ENCODE measurements at regions of chr3 and their contacts with region 1.

Region 1: DNA sequence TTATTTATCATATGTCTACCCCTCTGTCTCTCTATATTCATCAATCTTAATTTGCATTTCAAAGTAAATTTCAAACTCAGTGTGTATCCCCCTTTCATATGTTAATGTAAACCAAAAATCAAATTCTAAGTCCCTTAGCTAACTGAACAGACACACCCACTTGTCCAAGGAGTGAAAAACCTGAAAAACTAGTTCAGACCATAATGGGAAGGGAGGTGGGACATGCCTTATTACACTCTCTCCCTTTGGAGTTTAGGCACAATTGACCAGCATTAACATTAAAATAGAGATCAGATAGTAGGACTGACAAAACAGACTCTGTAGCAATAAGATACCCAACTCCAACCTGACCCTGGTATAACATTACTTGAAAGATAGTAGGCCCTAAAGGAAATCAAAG is 247.7 kb upstream of the GADL1 start:
- DNase-seq: no peak
- ATAC-seq: no peak
- H3K4me3 ChIP-seq: no peak overlapping the region
- H3K4me3 Mint-ChIP-seq: no peak overlapping the region
- H3K27ac ChIP-seq: no peak overlapping the region
- H3K27ac Mint-ChIP-seq: no peak overlapping the region
- H3K4me1 ChIP-seq: no peaks in the 10 kb centered on the region
- H3K4me1 Mint-ChIP-seq: no peaks in the 10 kb centered on the region
- H3K27me3 ChIP-seq: no peaks in the 10 kb centered on the region
- H3K27me3 Mint-ChIP-seq: no peaks in the 10 kb centered on the region

Region 2: DNA sequence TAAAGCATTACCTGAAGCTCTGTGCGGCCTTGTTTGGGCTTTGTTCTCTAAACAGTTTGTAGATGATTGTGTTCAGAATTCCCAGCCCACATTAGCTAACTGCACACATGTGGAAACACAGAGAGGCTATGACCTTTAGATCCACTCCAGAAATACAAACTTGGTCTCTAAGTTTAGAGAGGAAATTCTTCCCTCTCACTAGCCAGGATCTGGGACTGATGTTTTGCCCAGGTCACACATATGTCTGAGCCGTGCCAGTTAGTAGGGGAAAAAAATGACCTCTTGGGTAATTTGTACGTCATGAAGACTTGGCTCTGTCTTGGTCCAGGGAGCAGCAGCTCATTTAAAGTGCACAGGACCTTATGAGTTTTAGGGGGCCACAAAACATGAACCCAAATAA is 1638.2 kb before region 1 on chr3:
- CTCF ChIA-PET with region 1: no interaction called
- POLR2A ChIA-PET with region 1: interaction called in 1 of 2 experiments, 11 read pairs
- DNase-seq: no peak
- ATAC-seq: no peak
- H3K4me3 ChIP-seq: no peak overlapping the region
- H3K4me3 Mint-ChIP-seq: no peak overlapping the region
- H3K27ac ChIP-seq: no peak overlapping the region
- H3K27ac Mint-ChIP-seq: no peak overlapping the region
- H3K4me1 ChIP-seq: no peaks in the 10 kb centered on the region
- H3K4me1 Mint-ChIP-seq: no peaks in the 10 kb centered on the region
- H3K27me3 ChIP-seq: no peaks in the 10 kb centered on the region
- H3K27me3 Mint-ChIP-seq: no peaks in the 10 kb centered on the region

Region 3: DNA sequence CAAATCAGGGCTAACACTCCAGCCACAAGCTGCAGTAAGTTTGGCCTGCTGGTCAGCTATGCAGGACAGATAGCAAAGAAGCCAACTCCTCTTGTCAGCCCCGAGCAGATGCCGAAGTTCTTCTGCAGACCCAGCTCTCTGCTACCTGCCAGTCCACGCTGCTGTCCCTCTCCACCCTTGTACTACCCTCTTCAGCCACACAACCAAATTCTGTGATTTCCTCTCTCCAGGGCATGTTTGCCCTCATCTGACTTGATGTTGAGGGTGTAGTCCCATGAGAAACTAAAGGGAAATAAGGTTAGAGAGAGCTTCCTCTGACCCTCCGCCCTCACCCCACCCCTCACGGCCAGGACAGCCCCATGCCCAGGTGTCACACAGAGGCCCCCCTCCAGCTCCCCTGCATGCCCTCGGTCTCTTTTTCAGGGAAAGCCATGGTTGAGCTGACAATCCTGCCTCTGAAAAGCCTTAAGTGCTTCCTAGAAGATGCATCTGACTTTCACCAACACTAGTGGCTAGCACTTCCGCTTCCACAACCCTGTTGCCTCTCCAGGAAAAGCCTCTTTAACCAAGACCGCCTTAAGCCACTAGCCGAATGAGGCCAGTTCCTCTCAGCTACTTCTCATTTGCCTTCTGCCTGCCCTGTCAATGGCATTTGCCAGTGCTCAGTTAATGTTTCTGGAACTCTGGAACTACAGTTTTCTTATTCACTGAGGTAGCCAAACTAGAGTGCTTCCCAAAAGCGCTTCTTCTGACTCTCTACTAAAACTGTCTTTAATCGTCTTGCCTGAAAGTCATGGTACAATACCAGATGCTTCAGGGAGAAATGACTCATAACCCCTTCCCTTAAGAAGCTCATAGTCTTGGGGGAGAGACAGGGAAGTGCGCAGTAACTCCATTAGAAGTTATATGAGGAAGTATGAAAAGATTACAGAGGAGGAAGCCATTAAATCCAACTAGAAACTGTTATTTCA is 90.2 kb after region 1 on chr3:
- CTCF ChIA-PET with region 1: interaction called in 1 of 2 experiments, 10 read pairs
- POLR2A ChIA-PET with region 1: no interaction called
- DNase-seq: peak in 1 of 35 experiments; percentile 37
- ATAC-seq: no peak
- H3K4me3 ChIP-seq: no peak overlapping the region
- H3K4me3 Mint-ChIP-seq: peak overlapping the region in 1 of 3 donors; percentile 62
- H3K27ac ChIP-seq: peak overlapping the region; percentile 30
- H3K27ac Mint-ChIP-seq: peak overlapping the region; percentile 68 to 92
- H3K4me1 ChIP-seq: peaks cover 41 to 54% of the 10 kb centered on the region in 2 experiments
- H3K4me1 Mint-ChIP-seq: peaks cover 72 to 85% (median 84%) of the 10 kb centered on the region in 3 donors
- H3K27me3 ChIP-seq: no peaks in the 10 kb centered on the region
- H3K27me3 Mint-ChIP-seq: no peaks in the 10 kb centered on the region